ENCODE measurements at regions of chr3 and their contacts with region 1.

Region 1: DNA sequence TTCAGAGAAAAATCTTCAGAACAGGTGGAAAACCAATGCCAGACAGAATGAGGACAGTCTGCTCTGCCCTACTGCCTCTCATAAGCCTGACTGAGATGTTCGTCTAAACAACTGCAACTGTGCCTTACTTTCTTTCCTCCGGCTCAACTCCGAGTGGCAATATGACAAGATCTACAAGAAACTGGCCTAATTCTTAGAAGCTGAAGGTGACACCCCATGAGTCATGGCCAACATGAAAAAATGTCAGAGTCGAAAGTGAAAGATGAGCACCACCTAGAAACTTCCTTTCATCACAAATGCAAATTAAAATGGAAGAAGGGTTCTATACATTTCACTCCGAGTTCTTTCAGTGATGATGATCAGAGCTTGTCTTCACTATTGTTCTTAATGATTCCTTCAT is 12.9 kb downstream of the PCYT1A start:
- DNase-seq: peak; percentile 74
- H3K4me3 Mint-ChIP-seq: peak overlapping the region; percentile 62
- H3K27ac Mint-ChIP-seq: peak overlapping the region; percentile 90
- H3K4me1 Mint-ChIP-seq: peaks cover 47% of the 10 kb centered on the region
- H3K27me3 Mint-ChIP-seq: no peaks in the 10 kb centered on the region

Region 2: DNA sequence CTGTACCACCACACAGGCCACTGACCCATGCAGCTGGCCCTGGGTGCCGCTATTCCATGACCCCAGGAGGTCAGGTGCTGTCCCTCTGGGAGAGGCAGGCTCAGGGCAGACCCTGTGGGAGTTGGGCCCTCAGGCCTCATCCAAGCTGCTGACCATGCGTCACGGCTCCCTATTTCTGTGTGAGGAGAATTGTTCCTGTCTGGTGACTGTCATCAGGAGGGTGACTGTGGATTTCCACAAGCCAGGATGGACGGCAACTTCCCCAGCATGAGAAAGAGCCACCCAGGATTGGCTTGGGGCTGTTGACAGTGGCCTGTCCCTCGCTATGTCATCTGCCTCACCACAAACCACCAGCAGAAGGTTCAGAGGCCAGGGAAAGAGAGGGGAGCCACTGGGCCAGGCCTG is 104.7 kb before region 1 on chr3:
- intact Hi-C with region 1: no loop called
- DNase-seq: no peak
- H3K4me3 Mint-ChIP-seq: no peak overlapping the region
- H3K27ac Mint-ChIP-seq: no peak overlapping the region
- H3K4me1 Mint-ChIP-seq: peaks cover 6% of the 10 kb centered on the region
- H3K27me3 Mint-ChIP-seq: no peaks in the 10 kb centered on the region

Region 3: DNA sequence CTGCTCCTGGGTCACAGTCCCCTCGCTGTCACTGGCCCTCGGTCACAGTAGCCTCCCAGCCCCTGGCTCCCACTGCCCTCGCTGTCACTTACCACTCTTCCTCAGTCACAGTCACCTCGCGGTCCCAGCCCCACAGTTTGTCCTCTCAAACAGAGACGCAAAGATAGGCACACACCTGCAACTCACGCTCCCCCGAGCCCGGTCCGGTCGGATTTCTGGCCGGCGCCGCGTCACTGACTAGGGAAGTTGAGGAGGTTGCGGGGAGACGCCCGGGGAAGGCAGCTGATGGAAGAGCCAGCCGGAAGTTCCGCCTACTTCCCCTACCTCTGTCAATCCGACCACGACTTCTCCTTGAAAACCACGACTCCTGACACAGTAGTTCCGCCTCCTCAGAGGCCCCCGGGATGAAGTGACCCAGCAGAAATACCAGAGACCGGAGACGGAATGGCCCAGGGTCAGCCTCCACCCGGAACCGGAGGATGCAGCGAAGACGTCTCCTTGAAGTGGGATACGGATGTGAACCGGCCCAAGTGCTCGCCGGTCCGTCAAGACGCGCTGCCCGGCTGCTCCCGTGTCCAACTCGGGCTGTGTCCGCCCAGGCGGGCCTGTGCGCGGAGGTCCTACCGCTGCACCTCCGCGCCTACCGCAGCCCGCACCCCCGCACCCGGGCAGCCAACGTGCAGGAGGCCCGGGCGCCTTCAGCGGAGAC is 13.0 kb after region 1 on chr3 and contains the start of gene PCYT1A:
- intact Hi-C with region 1: loop called (anchors 1 kb)
- DNase-seq: peak; percentile 71
- H3K4me3 Mint-ChIP-seq: peak within 1 kb of the TSS; percentile 96
- H3K27ac Mint-ChIP-seq: peak within 1 kb of the TSS; percentile 91
- H3K4me1 Mint-ChIP-seq: peaks cover 27% of the 10 kb centered on the region
- H3K27me3 Mint-ChIP-seq: no peaks in the 10 kb centered on the region
- total RNA-seq, gene PCYT1A: 49.2 and 53.7 TPM in 2 replicates

Region 4: GRCh38 chr3:196317687-196318467 is 43.3 kb after region 1 on chr3 and contains the start of gene DYNLT2B:
- intact Hi-C with region 1: loop called (anchors 2 kb)
- DNase-seq: peak; percentile 88
- H3K4me3 Mint-ChIP-seq: peak within 1 kb of the TSS; percentile 94
- H3K27ac Mint-ChIP-seq: peak within 1 kb of the TSS; percentile 97
- H3K4me1 Mint-ChIP-seq: peaks cover 10% of the 10 kb centered on the region
- H3K27me3 Mint-ChIP-seq: no peaks in the 10 kb centered on the region
- total RNA-seq, gene DYNLT2B: 10.9 and 12.3 TPM in 2 replicates

Region 5: DNA sequence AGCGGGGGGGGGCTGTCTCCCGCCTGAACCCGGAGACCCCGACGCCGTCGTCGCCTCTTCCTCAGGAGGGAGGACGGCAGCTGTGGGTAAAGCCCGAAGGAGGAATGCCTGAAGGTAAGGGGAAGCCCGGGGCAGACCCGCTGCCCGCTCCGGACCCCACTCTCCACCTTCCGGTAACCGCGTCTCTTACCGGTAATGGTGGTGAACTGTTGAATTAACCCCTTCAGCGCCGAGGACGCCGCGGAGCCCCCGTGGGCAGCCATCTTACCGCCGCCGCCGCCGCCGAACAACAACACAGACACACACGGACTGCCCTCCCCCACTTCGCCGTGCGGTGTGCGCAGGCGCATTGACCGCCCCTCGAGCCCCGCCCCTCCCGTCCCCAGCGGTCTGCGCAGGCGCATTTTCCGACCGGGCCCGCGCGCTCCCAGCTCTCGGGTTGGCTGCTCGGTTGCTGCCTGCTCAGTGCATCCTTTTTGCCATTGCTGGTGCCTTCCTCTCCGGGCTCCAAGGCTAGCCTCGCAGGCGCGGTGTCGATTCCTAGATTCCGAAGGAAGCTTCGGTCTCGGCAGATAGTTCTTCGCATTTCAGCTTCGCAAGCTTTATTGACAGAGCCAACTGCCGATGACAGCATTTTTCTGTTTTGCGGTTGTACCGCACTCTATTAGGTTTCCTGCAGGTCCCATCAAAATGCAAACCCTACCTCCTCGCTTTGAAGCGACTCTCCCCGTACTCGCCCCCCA is 157.7 kb after region 1 on chr3 and contains the start of gene UBXN7:
- intact Hi-C with region 1: loop called (anchors 1 kb)
- DNase-seq: peak; percentile 93
- H3K4me3 Mint-ChIP-seq: peak within 1 kb of the TSS; percentile 86
- H3K27ac Mint-ChIP-seq: peak within 1 kb of the TSS; percentile 92
- H3K4me1 Mint-ChIP-seq: peaks cover 18% of the 10 kb centered on the region
- H3K27me3 Mint-ChIP-seq: no peaks in the 10 kb centered on the region
- total RNA-seq, gene UBXN7: 64.4 and 67.8 TPM in 2 replicates

Region 6: DNA sequence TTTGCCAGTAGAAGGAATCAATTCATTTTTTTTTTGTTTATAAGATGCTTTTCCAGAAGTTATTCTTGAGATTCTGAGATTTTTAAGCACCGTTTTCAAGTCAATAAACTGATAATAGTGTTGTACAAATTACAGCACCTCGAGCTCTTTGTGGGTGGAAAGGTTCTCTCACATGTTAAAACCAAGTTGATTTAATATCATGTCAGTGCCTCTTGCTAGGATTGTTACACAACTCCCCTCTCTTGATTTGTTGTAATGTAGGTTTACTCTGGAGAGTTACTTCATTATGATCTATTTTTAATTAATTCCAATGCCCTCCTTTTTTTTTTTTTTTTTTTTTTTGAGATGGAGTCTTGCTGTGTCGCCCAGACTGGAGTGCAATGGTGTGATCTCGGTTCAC is 183.5 kb after region 1 on chr3:
- intact Hi-C with region 1: no loop called
- DNase-seq: no peak
- H3K4me3 Mint-ChIP-seq: no peak overlapping the region
- H3K27ac Mint-ChIP-seq: no peak overlapping the region
- H3K4me1 Mint-ChIP-seq: peaks cover 7% of the 10 kb centered on the region
- H3K27me3 Mint-ChIP-seq: no peaks in the 10 kb centered on the region

Region 7: GRCh38 chr3:196726788-196727675 is 452.4 kb after region 1 on chr3:
- intact Hi-C with region 1: no loop called
- DNase-seq: no peak
- H3K4me3 Mint-ChIP-seq: no peak overlapping the region
- H3K27ac Mint-ChIP-seq: peak overlapping the region; percentile 65
- H3K4me1 Mint-ChIP-seq: peaks cover 40% of the 10 kb centered on the region
- H3K27me3 Mint-ChIP-seq: no peaks in the 10 kb centered on the region